Activated naive CD4-positive, alpha-beta T cell treated with anti-CD3 and anti-CD28 coated beads for 36 hours (primary cell): ENCODE measurements at regions of chr18 and their contacts with region 1.

Region 1: GRCh38 chr18:24118750-24119577 is 19.9 kb upstream of the CABYR start:
- DNase-seq: peak; percentile 91
- H3K4me3 Mint-ChIP-seq: no peak overlapping the region
- H3K27ac Mint-ChIP-seq: peak overlapping the region; percentile 38
- H3K4me1 Mint-ChIP-seq: peaks cover 15% of the 10 kb centered on the region
- H3K27me3 Mint-ChIP-seq: no peaks in the 10 kb centered on the region

Region 2: GRCh38 chr18:23619388-23619881 is 499.5 kb before region 1 on chr18:
- CTCF ChIA-PET with region 1: interaction called, 3 read pairs
- intact Hi-C with region 1: loop called (anchors 1 kb)
- DNase-seq: peak; percentile 9
- H3K4me3 Mint-ChIP-seq: peak overlapping the region; percentile 50
- H3K27ac Mint-ChIP-seq: no peak overlapping the region
- H3K4me1 Mint-ChIP-seq: no peaks in the 10 kb centered on the region
- H3K27me3 Mint-ChIP-seq: peaks cover 36% of the 10 kb centered on the region

Region 3: GRCh38 chr18:23812546-23813440 is 306.2 kb before region 1 on chr18:
- CTCF ChIA-PET with region 1: interaction called, 3 read pairs
- intact Hi-C with region 1: loop called (anchors 1 kb)
- DNase-seq: no peak
- H3K4me3 Mint-ChIP-seq: no peak overlapping the region
- H3K27ac Mint-ChIP-seq: no peak overlapping the region
- H3K4me1 Mint-ChIP-seq: peaks cover 21% of the 10 kb centered on the region
- H3K27me3 Mint-ChIP-seq: no peaks in the 10 kb centered on the region

Region 4: DNA sequence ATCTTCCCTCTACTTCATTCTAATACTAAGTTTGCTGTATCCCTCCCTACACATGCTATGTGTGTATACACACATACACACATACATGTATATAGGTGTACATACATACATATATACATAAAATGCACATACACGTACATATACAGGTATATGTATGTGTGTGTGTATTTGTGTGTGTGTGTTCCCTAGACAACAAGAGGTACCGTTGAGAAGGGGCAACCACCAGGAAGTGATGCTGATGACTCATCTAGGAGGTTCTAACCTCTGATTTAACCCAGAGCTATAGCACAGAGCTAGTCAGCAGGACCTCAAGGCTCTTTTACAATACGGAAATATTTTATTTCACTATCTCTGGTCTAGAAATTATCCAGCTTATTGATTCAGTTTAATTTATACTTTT is 290.5 kb before region 1 on chr18:
- CTCF ChIA-PET with region 1: interaction called, 3 read pairs
- intact Hi-C with region 1: loop called (anchors 1 kb)
- DNase-seq: peak; percentile 61
- H3K4me3 Mint-ChIP-seq: no peak overlapping the region
- H3K27ac Mint-ChIP-seq: no peak overlapping the region
- H3K4me1 Mint-ChIP-seq: peaks cover 37% of the 10 kb centered on the region
- H3K27me3 Mint-ChIP-seq: no peaks in the 10 kb centered on the region

Region 5: DNA sequence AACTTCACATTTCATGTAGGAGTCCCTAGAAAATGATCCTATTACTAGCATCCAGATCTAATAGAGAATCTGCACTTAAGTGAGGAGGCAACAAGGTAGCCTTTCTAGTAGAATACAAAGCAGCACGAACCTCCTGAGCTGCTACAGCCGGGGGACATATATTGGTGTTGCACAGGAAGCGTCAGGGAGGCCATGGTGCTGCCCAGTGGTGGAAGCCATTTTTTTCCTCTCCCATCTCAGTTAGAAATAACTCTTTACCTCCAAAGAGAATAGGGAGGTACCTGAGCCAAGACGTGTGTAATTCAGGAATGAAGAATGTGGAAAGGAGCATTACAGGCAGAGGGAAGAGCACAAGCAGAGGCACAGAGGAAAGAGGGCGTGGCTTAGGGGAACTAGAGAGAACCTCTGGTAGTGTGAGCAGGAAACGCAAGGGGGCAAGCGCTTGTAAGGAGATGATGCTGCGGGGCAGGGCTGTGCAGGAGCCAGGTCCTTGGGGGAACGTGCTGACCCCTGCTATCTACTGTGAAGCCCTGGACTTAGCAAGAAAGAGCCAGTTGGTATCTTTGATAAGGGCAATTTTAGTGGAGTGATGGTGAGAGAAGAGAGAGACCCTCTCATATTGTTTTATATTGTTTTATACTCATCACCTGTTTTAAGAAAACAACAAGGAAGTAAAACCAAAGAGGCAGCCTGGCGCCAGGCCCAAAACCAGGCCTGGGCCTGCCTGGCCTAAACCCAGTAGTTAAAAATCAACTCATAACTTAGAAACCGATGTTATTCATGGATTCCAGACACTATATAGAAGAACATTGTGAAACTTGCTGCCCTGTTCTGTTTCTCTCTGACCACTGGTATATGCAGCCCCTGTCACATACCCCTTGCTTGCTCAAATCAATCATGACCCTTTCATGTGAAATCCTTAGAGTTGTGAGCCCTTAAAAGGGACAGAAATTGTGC is 154.4 kb before region 1 on chr18:
- CTCF ChIA-PET with region 1: no interaction called
- intact Hi-C with region 1: loop called (anchors 1 kb)
- DNase-seq: peak; percentile 75
- H3K4me3 Mint-ChIP-seq: peak overlapping the region; percentile 43
- H3K27ac Mint-ChIP-seq: peak overlapping the region; percentile 81
- H3K4me1 Mint-ChIP-seq: peaks cover 45% of the 10 kb centered on the region
- H3K27me3 Mint-ChIP-seq: no peaks in the 10 kb centered on the region

Region 6: DNA sequence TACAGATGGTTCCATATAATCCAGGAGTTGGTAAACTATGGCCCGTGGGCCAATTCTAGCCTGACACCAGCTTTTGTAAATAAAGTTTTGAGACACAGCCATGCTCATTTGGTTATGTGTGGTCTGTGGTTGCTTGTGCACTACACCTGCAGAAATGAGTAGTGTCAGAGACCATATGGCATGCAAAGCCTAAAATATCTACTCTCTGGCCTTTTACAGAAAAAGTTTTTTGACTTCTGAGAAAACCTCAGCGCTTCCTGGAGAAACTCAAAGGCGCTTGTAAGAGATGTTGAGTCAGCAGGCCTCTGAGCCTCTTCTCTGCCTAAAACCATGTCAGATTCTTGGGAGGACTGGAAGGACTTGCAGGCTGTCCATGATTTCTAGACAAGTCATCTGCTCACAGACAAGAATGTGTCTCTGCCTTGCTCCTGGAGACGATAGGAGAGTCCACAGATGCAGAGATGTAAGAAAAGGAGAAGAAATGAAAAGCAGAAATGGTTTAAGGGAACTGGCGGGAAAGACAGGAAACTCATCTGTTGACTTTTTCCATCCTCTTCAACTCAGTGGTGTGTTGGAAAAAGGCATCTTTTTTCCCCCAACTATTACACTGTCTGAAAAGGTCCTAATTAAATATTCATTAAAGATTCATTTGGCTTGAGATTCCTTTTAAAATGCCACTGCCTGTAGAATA is 99.2 kb before region 1 on chr18:
- CTCF ChIA-PET with region 1: interaction called, 3 read pairs
- intact Hi-C with region 1: loop called (anchors 1 kb)
- DNase-seq: peak; percentile 81
- H3K4me3 Mint-ChIP-seq: peak overlapping the region; percentile 64
- H3K27ac Mint-ChIP-seq: peak overlapping the region; percentile 94
- H3K4me1 Mint-ChIP-seq: peaks cover 83% of the 10 kb centered on the region
- H3K27me3 Mint-ChIP-seq: no peaks in the 10 kb centered on the region

Region 7: DNA sequence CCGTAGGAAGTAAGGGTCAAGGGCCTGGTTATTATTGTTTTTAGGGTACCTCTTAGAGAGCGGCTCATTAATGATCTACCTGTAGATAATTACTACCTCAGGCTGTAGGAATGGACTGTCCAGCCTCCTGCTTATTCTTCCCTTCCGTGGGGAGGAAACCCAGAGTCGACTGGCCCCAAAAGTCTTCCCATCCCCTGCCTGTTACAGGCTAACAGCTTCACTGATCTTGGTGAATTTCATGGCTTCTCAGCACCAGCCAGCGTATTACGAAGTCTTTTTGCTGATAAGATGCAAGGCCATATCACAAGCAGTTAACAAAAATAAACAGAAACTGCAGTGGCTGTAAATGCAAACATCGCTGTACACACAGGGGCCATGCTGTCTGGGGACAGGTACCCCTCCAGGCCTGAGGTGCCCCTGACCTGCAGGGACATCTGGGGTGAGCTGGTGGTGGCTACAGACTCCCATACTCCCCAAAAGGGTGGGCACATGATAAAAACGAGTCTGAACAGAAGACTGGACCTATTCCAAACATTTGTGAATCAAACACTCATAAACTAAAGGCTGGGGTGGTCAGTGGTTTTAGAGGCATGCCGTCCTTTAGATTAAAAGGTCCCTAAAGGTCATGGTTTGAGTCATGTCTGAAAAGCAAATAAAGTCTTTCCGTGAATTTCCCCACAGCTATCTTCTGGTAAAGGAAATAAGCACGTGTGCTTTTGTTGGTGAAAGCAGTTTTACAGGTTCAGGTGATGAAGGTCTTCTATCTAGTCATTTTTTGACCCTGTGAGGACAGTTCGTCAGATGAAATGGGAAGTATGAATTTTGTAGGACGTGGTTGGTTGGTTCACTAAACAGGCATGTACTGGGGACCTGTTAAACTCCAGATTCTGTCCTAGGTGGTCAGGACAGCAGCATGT is 67.7 kb before region 1 on chr18:
- CTCF ChIA-PET with region 1: interaction called, 3 read pairs
- intact Hi-C with region 1: loop called (anchors 2 kb)
- DNase-seq: no peak
- H3K4me3 Mint-ChIP-seq: peak overlapping the region; percentile 5
- H3K27ac Mint-ChIP-seq: peak overlapping the region; percentile 72
- H3K4me1 Mint-ChIP-seq: peaks cover 75% of the 10 kb centered on the region
- H3K27me3 Mint-ChIP-seq: no peaks in the 10 kb centered on the region

Region 8: DNA sequence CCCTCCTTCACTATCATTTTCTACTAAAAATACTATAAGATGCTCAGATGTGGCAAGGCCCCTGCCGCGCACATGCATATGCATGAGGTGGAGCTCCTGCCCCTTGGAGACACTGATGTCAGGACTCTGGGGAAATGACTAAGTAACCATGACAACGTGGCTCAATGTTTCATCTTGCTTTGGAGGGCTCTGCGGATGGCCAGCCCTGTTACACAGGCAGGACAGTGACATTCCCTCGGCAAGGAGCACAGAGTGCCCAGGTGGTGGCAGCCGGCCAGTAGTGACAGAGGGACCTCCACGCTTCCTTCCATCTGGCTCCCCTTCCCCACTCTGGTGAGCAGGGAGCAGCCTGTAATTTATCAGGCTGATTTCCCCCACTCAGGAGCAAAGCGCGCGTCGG is 1607.3 kb after region 1 on chr18:
- CTCF ChIA-PET with region 1: no interaction called
- intact Hi-C with region 1: no loop called
- DNase-seq: no peak
- H3K4me3 Mint-ChIP-seq: no peak overlapping the region
- H3K27ac Mint-ChIP-seq: no peak overlapping the region
- H3K4me1 Mint-ChIP-seq: no peaks in the 10 kb centered on the region
- H3K27me3 Mint-ChIP-seq: peaks cover 26% of the 10 kb centered on the region